ENCODE measurements at regions of chr9 and their contacts with region 1.

Region 1: DNA sequence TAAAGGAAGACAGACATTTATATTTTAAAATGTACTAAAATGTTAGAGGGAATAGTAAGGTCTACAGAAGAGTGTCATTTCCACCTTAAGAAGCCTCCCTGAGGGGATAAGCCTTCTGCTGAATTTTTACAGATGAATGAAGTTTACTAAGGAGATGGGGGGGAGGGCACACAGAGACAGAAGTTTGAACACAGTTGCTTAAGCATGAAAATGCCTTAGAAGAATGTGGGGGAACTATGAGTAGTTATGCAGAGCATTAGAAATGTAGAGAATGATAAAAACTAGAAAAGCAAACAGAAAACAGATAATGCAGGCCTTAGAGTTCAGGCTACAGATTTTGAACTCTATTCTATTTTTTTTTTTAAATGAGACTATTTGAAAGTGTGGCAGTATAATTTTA is 232.2 kb upstream of the VLDLR start:
- ATAC-seq: peak in 1 of 8 experiments; percentile 90
- H3K4me3 ChIP-seq: no peak overlapping the region
- H3K27ac ChIP-seq: no peak overlapping the region
- H3K4me1 ChIP-seq: peaks cover 0 to 4% of the 10 kb centered on the region in 2 donors

Region 2: DNA sequence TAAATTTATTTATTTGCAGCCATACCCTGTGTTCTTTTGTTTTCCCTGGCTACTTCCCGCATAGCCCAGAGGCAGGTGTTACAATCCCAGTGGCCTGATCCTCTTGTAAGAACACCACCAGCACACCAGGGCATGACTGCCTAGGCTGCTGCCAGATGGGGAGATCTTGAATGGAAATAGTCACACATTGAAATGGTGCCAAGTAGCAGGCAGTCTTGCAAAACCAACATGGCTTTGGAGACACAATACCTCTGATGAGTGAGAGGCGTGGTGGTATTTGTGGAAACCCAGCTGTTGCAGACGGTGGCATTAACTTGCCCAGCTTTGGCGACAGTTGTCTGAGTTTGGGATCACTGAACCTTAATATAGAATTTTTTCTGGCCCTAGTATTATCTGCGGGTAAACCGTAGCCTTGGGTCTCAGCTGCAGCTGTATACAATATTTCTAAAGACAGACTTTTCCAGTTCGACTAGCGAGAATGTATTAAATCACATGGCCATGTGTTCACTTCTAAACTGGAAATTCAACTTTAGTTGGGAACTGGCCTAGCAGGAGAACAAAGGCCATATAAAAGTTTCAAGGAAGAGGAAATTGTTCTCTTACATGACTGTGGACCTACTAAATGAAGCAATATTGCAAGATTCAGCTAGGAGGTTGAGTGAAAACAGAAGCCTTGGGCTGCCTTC is 97.3 kb before region 1 on chr9:
- in situ Hi-C with region 1: loop called in 1 of 9 experiments (anchors 25 kb)
- ATAC-seq: peak in 5 of 8 experiments; percentile 25 to 51 (median 41)
- H3K4me3 ChIP-seq: no peak overlapping the region
- H3K27ac ChIP-seq: no peak overlapping the region
- H3K4me1 ChIP-seq: peaks cover 4 to 8% of the 10 kb centered on the region in 2 donors

Region 3: DNA sequence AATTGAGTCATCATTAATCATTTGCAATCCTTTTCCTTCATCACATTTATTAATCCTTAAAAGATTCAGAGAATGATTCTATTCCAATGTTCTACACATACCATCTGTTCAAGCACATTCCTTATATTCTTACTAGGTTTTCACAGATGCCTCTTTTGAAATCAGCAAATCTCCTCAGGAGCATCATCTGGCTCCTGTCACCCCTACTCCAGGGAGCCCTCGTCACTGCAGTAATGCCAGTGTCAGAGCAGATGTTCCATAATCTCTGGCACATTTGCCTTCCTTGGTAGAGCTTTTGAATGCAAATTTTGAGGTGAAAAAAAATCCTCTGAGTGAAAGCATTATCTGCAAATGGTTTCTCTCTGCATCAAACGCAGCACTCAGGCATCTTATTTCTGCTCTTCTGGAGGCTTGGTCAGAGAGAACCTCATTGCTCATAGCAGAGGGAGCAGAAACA is 320.3 kb after region 1 on chr9:
- in situ Hi-C with region 1: no loop called
- ATAC-seq: peak in 3 of 8 experiments; percentile 19 to 47 (median 32)
- H3K4me3 ChIP-seq: no peak overlapping the region
- H3K27ac ChIP-seq: no peak overlapping the region
- H3K4me1 ChIP-seq: no peaks in the 10 kb centered on the region